Activated CD4-positive, alpha-beta memory T cell treated with anti-CD3 and anti-CD28 coated beads for 36 hours (primary cell): ENCODE measurements at regions of chr1 and their contacts with region 1.

Region 1: DNA sequence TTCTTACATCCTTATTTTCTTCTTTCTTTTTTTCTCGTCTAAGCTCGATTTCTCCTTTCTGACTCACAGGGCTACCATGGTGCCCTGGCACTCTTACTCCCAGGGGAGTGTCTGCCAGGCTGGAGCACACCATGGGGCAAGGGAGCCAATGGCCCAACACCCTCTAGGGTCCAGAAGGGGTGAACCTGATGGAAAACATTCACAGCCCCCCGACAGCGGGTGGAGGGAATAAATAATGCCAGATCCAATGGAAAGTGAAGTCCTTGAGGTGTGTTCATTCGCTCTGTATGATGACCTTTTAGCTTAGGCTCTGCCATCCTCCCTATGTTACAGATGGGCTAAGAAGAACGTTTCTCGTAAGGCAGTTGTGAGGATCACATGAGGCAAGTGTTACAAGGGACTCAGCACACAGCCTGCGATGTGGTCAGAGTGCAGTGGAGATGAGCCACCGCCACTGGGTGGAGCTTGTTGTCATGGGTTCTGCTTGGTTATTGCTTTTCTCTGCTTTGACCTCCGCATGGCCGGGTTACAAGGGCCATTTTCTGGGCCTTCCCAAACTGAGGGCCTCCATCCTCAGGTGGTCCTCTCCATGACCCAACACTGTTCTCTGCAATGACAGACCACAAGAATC is 3.5 kb upstream of the FCMR start:
- DNase-seq: peak; percentile 82
- H3K4me3 Mint-ChIP-seq: no peak overlapping the region
- H3K27ac Mint-ChIP-seq: no peak overlapping the region
- H3K4me1 Mint-ChIP-seq: peaks cover 33% of the 10 kb centered on the region
- H3K27me3 Mint-ChIP-seq: no peaks in the 10 kb centered on the region

Region 2: DNA sequence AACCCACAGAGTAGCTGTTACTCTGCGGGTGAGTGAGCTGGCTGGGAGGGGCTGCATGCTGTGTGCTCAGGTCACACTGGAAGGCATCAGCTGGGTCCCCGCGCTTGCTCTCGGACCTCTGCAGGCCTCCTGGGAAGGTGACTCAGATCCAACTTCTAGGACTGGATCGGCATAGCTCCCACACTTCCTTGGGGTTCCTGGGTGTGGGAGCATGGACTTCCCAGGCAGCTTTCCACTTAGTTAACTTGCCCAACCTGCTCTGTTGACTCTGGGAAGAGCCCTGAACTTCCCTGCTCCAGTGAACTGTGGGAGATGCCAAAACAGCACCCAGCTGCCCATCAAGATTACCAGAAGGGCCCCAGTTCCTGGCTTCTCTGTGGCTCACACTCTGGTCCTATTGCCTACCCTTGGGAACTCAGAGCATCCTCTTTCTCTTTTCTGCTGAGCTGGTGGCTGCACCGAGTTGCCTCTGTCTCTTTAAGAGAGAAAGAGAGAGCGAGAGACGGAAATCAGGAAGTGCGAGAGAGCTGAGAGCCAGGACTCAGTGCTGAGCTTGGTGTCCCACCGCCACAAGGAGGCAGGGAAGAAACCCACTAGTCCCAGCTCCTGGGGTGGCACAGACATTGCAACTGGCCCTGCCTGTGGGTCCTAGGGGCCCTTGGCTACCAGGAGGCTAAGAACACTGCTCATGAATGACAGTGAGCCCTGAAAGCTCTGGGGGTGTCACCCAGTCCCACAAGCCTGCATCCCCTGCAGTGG is 455.1 kb before region 1 on chr1 and contains the start of gene IKBKE:
- CTCF ChIA-PET with region 1: no interaction called
- POLR2A ChIA-PET with region 1: no interaction called
- intact Hi-C with region 1: loop called (anchors 10 kb)
- DNase-seq: peak; percentile 74
- H3K4me3 Mint-ChIP-seq: peak within 1 kb of the TSS; percentile 85
- H3K27ac Mint-ChIP-seq: peak within 1 kb of the TSS; percentile 90
- H3K4me1 Mint-ChIP-seq: peaks cover 87% of the 10 kb centered on the region
- H3K27me3 Mint-ChIP-seq: no peaks in the 10 kb centered on the region
- total RNA-seq, gene IKBKE: 18.4 to 19.4 TPM

Region 3: GRCh38 chr1:206865013-206865671 is 60.1 kb before region 1 on chr1 and contains the start of gene IL20:
- CTCF ChIA-PET with region 1: interaction called, 14 read pairs
- POLR2A ChIA-PET with region 1: no interaction called
- intact Hi-C with region 1: no loop called
- DNase-seq: peak; percentile 93
- H3K4me3 Mint-ChIP-seq: no peak within 1 kb of the TSS
- H3K27ac Mint-ChIP-seq: no peak within 1 kb of the TSS
- H3K4me1 Mint-ChIP-seq: peaks cover 16% of the 10 kb centered on the region
- H3K27me3 Mint-ChIP-seq: peaks cover 10% of the 10 kb centered on the region
- total RNA-seq, gene IL20: not detected

Region 4: GRCh38 chr1:206905280-206906164 is 19.7 kb before region 1 on chr1:
- CTCF ChIA-PET with region 1: interaction called, 35 read pairs
- POLR2A ChIA-PET with region 1: interaction called, 8 read pairs
- intact Hi-C with region 1: loop called (anchors 1 kb)
- DNase-seq: peak; percentile 74
- H3K4me3 Mint-ChIP-seq: peak overlapping the region; percentile 33
- H3K27ac Mint-ChIP-seq: peak overlapping the region; percentile 83
- H3K4me1 Mint-ChIP-seq: peaks cover 69% of the 10 kb centered on the region
- H3K27me3 Mint-ChIP-seq: no peaks in the 10 kb centered on the region

Region 5: DNA sequence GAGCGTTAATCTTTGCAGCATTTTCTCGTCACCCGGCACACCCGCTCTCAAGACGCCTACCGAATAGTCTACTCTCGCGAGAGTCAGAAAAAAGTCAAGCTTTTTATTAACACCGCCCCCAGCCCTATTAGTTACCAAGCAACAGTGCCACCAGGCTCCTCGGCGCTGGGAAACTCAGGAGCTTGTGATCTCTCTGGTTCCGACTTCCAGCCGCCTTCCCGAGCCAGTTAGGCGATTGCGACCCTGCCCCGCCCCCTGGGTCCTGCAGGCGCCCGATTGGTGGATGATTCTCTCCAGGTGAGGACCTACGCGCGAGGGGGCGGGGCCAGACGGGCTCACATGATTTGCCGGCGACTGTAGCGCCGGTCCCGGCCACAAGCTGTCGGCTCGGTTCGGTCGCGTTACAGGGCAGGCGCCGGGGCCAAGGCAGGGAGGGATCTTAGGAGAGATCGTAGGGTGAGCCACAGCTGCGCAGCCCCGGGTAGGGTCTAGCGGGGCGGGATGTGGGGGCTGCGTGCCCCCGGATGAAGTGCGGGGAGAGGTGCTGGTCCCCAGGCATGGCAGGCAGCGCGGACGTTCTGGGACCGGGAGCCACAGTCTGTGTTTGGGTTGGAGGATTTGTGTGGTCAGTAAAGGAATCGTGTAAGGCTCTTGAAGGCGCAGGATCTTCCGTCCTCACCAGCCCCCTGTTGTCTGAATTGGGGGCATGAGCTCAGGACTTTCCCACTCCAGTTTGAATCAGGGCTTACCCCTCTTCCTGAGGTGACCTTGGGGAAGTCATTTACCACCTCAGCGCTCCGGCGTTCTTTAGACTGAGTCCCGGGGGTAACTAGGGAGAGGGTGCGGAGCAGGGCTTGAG is 127.9 kb after region 1 on chr1 and contains the start of gene PFKFB2:
- CTCF ChIA-PET with region 1: interaction called, 4 read pairs
- POLR2A ChIA-PET with region 1: no interaction called
- intact Hi-C with region 1: loop called (anchors 5 kb)
- DNase-seq: peak; percentile 95
- H3K4me3 Mint-ChIP-seq: peak within 1 kb of the TSS; percentile 93
- H3K27ac Mint-ChIP-seq: peak within 1 kb of the TSS; percentile 67
- H3K4me1 Mint-ChIP-seq: peaks cover 33% of the 10 kb centered on the region
- H3K27me3 Mint-ChIP-seq: no peaks in the 10 kb centered on the region
- total RNA-seq, gene PFKFB2: 2.1 to 2.5 TPM

Region 6: DNA sequence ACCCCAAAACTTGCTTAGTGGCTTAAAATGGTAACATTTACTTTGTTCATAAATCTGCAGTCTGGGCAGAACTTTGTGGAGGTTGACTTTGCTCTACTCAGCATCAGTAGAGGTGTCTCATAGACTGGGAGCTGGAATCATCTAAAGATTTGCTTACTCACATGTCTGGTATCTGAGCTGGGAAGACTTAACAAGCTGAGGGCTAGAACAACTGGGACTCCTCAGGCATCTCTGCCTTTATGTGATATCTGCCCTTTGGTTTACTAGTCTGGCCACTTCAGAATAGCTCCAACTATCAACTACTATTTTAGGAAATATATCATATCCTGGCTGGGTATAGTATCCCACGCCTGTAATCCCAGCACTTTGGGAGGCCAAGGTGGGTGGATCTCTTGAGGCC is 261.3 kb after region 1 on chr1:
- CTCF ChIA-PET with region 1: no interaction called
- POLR2A ChIA-PET with region 1: no interaction called
- intact Hi-C with region 1: no loop called
- DNase-seq: no peak
- H3K4me3 Mint-ChIP-seq: no peak overlapping the region
- H3K27ac Mint-ChIP-seq: no peak overlapping the region
- H3K4me1 Mint-ChIP-seq: peaks cover 13% of the 10 kb centered on the region
- H3K27me3 Mint-ChIP-seq: no peaks in the 10 kb centered on the region